Sigmoid colon (tissue), 7 donors: ENCODE measurements at regions of chr2 and their contacts with region 1.

Region 1: DNA sequence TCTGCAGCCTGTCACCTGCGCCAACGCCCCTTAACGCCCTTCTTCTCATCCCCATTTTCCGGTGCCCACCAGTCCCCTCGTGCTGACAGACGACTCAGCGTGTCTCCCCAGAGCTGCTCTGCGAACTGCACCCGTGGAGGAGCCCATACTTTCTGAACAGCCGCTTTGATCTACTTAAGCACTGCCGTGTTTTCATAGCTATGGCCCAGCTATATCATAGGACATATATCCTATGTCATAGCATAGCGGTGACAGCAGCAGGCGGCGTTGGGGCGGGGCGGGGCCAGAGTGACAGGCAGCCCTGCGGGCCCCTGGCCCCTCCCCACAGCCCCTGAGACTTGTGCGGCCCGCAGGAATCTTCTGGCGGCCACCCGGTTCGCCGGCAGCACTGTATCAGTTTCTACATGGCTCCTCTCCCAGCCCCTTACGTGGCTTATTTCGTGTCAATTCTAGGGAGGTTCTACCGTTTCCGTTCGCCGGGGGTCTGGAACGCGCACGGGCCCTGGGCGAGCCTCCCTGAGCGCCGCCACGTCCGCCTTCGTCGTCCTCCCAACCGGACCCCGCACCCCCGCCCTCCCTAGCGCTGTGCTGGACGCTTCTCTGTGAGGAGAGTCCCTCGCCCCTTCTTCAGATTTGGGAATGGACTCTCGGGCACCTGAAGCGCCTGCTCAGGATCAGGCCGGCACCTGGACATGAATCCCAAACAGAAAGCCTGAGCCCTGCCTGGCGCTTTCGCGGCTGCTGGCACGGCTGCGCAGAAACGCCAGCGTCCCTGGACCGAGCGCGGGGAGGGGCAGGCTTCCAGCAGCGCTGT is 35.4 kb downstream of the PTPN18 start:
- DNase-seq: peak; percentile 85
- H3K4me3 ChIP-seq: peak overlapping the region; percentile 61 to 74 (median 66)
- H3K27ac ChIP-seq: peak overlapping the region; percentile 80 to 89 (median 83)
- H3K4me1 ChIP-seq: peaks cover 0 to 20% (median 17%) of the 10 kb centered on the region in 4 donors
- H3K27me3 ChIP-seq: peaks cover 0 to 2% (median 0%) of the 10 kb centered on the region in 3 donors
- CTCF ChIP-seq: no peak
- EP300 ChIP-seq: no peak
- POLR2A ChIP-seq: peak; percentile 8 to 27

Region 2: GRCh38 chr2:130162968-130163367 is 228.3 kb before region 1 on chr2:
- intact Hi-C with region 1: no loop called
- DNase-seq: no peak
- H3K4me3 ChIP-seq: no peak overlapping the region
- H3K27ac ChIP-seq: no peak overlapping the region
- H3K4me1 ChIP-seq: no peaks in the 10 kb centered on the region
- H3K27me3 ChIP-seq: no peaks in the 10 kb centered on the region
- CTCF ChIP-seq: no peak
- EP300 ChIP-seq: no peak
- POLR2A ChIP-seq: no peak

Region 3: GRCh38 chr2:130372055-130372832 is 19.0 kb before region 1 on chr2:
- intact Hi-C with region 1: loop called (anchors 1 kb)
- DNase-seq: peak; percentile 93
- H3K4me3 ChIP-seq: peak overlapping the region; percentile 59 to 97 (median 79)
- H3K27ac ChIP-seq: peak overlapping the region; percentile 82 to 95 (median 88)
- H3K4me1 ChIP-seq: peaks cover 0 to 33% (median 27%) of the 10 kb centered on the region in 4 donors
- H3K27me3 ChIP-seq: no peaks in the 10 kb centered on the region
- CTCF ChIP-seq: peak; percentile 92 to 94 (median 94)
- EP300 ChIP-seq: peak in 1 of 4 donors; percentile 13
- POLR2A ChIP-seq: peak; percentile 13 to 42

Region 4: DNA sequence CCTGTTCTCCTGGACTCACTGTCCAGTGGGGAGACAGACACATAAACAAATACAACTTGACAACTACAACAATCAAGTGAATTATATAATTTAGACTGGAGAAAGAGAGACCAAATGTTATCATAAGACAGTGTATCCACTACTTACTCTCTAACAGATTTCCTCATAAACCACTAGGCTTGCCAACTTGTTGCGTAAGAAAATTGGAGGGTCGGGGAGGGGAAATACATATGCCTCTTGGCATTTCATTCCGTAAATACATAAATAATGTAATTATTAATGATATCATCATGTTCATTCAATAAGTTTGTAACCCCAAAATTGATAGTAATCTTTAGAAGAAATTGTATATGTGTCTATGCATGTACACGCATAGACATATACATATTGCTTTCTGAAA is 957.8 kb after region 1 on chr2:
- intact Hi-C with region 1: no loop called
- DNase-seq: no peak
- H3K4me3 ChIP-seq: no peak overlapping the region
- H3K27ac ChIP-seq: no peak overlapping the region
- H3K4me1 ChIP-seq: no peaks in the 10 kb centered on the region
- H3K27me3 ChIP-seq: peaks cover 0 to 11% (median 2%) of the 10 kb centered on the region in 3 donors
- CTCF ChIP-seq: no peak
- EP300 ChIP-seq: no peak
- POLR2A ChIP-seq: no peak